Activated T-helper 1 cell treated with anti-CD3 and anti-CD28 coated beads, Interleukin-12 subunit alpha, Interleukin-12 subunit beta, Interleukin-2, Interleukin-4 antibody, amounts not matched to agents 30 ng/mL and 10 ng/mL and 1 ng/mL, durations not matched to agents 14 hours and 24 hours and 36 hours (primary cell): ENCODE measurements at regions of chr6 and their contacts with region 1.

Region 1: GRCh38 chr6:90080876-90081481 is 186.7 kb downstream of the GJA10 start:
- DNase-seq: peak; percentile 76
- H3K4me3 Mint-ChIP-seq: peak overlapping the region; percentile 88
- H3K27ac Mint-ChIP-seq: peak overlapping the region; percentile 95
- H3K4me1 Mint-ChIP-seq: peaks cover 96% of the 10 kb centered on the region
- H3K27me3 Mint-ChIP-seq: no peaks in the 10 kb centered on the region

Region 2: DNA sequence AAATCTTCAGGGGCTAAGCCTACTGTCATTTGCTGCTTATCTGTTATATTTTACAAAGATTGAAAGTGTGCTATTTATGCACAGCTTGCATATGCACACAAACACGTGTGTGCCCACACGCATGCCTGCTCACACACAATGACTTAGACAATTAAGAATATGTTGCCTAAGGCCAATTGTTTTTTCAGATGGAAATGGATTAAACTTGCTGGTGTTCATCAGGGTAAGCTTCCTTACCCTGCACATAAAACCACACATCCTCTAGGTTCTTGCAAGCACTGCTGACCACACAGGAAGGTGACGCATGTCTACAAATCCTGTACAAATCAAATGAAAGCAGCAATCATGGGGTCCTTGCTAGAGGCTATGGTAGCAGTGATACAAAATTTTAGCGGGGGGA is 128.3 kb before region 1 on chr6:
- intact Hi-C with region 1: loop called (anchors 1 kb)
- DNase-seq: peak; percentile 54
- H3K4me3 Mint-ChIP-seq: peak overlapping the region; percentile 53
- H3K27ac Mint-ChIP-seq: peak overlapping the region; percentile 61
- H3K4me1 Mint-ChIP-seq: peaks cover 71% of the 10 kb centered on the region
- H3K27me3 Mint-ChIP-seq: no peaks in the 10 kb centered on the region

Region 3: DNA sequence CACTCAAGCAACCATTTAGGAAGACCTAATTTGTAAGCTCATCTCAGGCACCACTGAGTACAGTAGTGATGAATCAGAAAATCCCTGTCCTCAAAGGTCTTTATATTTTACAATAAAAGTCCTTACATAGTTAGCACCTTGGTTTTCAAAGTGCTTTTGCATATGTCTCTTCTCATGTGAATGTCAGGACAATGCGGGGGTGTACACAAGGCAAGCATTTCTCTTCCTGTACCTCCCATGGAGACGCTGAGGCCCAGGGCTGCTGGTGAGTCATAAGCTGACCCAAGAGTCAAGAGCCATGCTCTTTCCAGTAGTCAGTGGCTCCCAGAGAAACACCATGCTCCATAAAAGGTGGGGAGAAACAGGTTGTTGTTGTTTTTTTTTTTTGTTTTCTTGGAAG is 12.7 kb before region 1 on chr6:
- intact Hi-C with region 1: loop called (anchors 1 kb)
- DNase-seq: no peak
- H3K4me3 Mint-ChIP-seq: peak overlapping the region; percentile 6
- H3K27ac Mint-ChIP-seq: peak overlapping the region; percentile 25
- H3K4me1 Mint-ChIP-seq: peaks cover 81% of the 10 kb centered on the region
- H3K27me3 Mint-ChIP-seq: no peaks in the 10 kb centered on the region

Region 4: GRCh38 chr6:90194371-90194841 is 113.4 kb after region 1 on chr6:
- intact Hi-C with region 1: loop called (anchors 1 kb)
- DNase-seq: no peak
- H3K4me3 Mint-ChIP-seq: peak overlapping the region; percentile 38
- H3K27ac Mint-ChIP-seq: peak overlapping the region; percentile 54
- H3K4me1 Mint-ChIP-seq: peaks cover 68% of the 10 kb centered on the region
- H3K27me3 Mint-ChIP-seq: peaks cover 2% of the 10 kb centered on the region

Region 5: DNA sequence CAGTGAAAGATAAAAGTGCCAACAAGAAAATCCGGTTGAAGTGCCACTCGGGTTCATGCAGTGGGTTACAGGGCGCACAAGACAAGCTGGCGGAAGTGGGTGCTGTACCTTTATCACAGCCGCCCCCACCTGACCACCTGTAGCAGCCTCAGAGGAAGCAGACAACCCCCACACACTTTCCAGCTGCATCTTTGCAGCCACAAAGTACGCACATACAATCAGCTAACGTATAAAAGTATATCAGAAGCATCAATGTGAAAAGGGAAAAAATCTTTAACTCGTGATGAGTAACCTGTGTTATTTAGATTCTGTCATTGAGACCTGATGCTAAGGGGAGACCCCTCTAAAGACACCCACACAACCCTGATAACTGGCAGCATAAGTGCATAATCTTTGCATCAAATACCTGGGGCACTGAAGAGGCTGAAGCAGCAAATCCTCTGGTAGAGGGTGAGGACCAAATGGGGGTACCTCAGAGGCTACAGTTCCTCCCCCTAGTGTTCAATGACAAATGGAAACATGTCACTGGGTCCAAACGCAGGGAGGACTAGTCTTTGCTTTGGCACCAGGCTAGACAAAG is 193.6 kb after region 1 on chr6:
- intact Hi-C with region 1: loop called (anchors 1 kb)
- DNase-seq: peak; percentile 75
- H3K4me3 Mint-ChIP-seq: peak overlapping the region; percentile 75
- H3K27ac Mint-ChIP-seq: peak overlapping the region; percentile 94
- H3K4me1 Mint-ChIP-seq: peaks cover 86% of the 10 kb centered on the region
- H3K27me3 Mint-ChIP-seq: no peaks in the 10 kb centered on the region

Region 6: GRCh38 chr6:90445533-90446108 is 364.6 kb after region 1 on chr6:
- intact Hi-C with region 1: loop called (anchors 1 kb)
- DNase-seq: no peak
- H3K4me3 Mint-ChIP-seq: no peak overlapping the region
- H3K27ac Mint-ChIP-seq: peak overlapping the region; percentile 88
- H3K4me1 Mint-ChIP-seq: peaks cover 66% of the 10 kb centered on the region
- H3K27me3 Mint-ChIP-seq: no peaks in the 10 kb centered on the region